GM12878 (cell line): ENCODE measurements at regions of chr7 and their contacts with region 1.

Region 1: GRCh38 chr7:154913638-154914312 is 89.1 kb downstream of the PAXIP1 start:
- DNase-seq: no peak
- ATAC-seq: peak; percentile 100
- H3K4me3 ChIP-seq: no peak overlapping the region
- H3K27ac ChIP-seq: no peak overlapping the region
- H3K4me1 ChIP-seq: no peaks in the 10 kb centered on the region
- H3K27me3 ChIP-seq: no peaks in the 10 kb centered on the region; a peak in 1 of 4 replicates
- CTCF ChIP-seq: peak; percentile 76 to 92 (median 88)
- EP300 ChIP-seq: no peak
- POLR2A ChIP-seq: no peak
- RAD21 ChIP-seq: peak; percentile 84

Region 2: GRCh38 chr7:154867068-154867467 is 46.7 kb before region 1 on chr7:
- CTCF ChIA-PET with region 1: interaction called, 6 read pairs
- POLR2A ChIA-PET with region 1: interaction called, 9 read pairs
- RAD21 ChIA-PET with region 1: interaction called, 4 read pairs
- SMC1A ChIA-PET with region 1: interaction called, 3 read pairs
- in situ Hi-C with region 1: no loop called
- intact Hi-C with region 1: loop called (anchors 5 kb)
- DNase-seq: peak; percentile 59
- ATAC-seq: peak; percentile 80
- H3K4me3 ChIP-seq: no peak overlapping the region
- H3K27ac ChIP-seq: no peak overlapping the region
- H3K4me1 ChIP-seq: peaks cover 8% of the 10 kb centered on the region
- H3K27me3 ChIP-seq: no peaks in the 10 kb centered on the region
- CTCF ChIP-seq: no peak
- EP300 ChIP-seq: peak; percentile 58 to 77; a peak in 2 of 4 replicates
- POLR2A ChIP-seq: no peak
- RAD21 ChIP-seq: no peak

Region 3: GRCh38 chr7:154892462-154892861 is 21.3 kb before region 1 on chr7:
- CTCF ChIA-PET with region 1: interaction called, 10 read pairs
- POLR2A ChIA-PET with region 1: no interaction called
- RAD21 ChIA-PET with region 1: no interaction called
- SMC1A ChIA-PET with region 1: no interaction called
- in situ Hi-C with region 1: no loop called
- intact Hi-C with region 1: no loop called
- DNase-seq: no peak
- ATAC-seq: no peak
- H3K4me3 ChIP-seq: no peak overlapping the region
- H3K27ac ChIP-seq: no peak overlapping the region
- H3K4me1 ChIP-seq: no peaks in the 10 kb centered on the region
- H3K27me3 ChIP-seq: no peaks in the 10 kb centered on the region
- CTCF ChIP-seq: no peak
- EP300 ChIP-seq: no peak
- POLR2A ChIP-seq: no peak
- RAD21 ChIP-seq: no peak

Region 4: DNA sequence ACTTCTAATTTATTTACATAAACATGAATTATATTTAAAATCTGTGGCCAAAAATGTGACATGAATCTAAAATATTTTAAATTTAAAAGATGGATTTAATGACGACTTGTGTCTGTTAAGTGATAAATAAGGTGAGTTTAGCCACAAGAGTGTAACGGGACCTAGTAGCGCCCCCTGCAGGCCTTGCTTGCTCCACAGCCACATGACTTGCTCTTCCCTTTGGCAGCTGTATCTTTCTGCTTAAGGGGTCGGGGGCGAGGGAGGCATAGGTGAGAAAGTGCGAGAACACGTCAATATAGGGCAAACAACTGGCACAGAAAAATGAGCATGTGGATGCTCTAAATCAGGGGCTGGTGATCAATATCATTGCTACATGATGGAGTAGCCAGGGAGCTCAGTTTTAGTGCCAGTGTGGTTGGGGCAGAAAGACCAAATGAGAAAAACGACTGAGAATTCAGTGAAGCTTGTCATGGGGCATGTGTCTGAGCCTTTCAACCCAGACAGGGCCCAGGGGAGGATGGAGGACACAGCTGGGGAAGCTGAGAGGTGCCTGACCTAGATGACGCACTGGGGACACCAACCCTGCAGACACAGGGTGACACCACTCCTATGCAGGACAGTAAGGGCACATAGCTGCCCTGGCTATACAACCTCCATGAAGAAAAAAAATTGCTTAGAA is 39.4 kb after region 1 on chr7:
- CTCF ChIA-PET with region 1: interaction called, 11 read pairs
- POLR2A ChIA-PET with region 1: no interaction called
- RAD21 ChIA-PET with region 1: no interaction called
- SMC1A ChIA-PET with region 1: interaction called, 4 read pairs
- in situ Hi-C with region 1: no loop called
- intact Hi-C with region 1: loop called (anchors 1 kb)
- DNase-seq: no peak
- ATAC-seq: peak; percentile 87
- H3K4me3 ChIP-seq: no peak overlapping the region
- H3K27ac ChIP-seq: no peak overlapping the region
- H3K4me1 ChIP-seq: no peaks in the 10 kb centered on the region
- H3K27me3 ChIP-seq: no peaks in the 10 kb centered on the region
- CTCF ChIP-seq: peak; percentile 54 to 68 (median 63)
- EP300 ChIP-seq: no peak
- POLR2A ChIP-seq: no peak
- RAD21 ChIP-seq: 0 out of 2 replicates have a peak, but pooled peaks have one; percentile 25

Region 5: GRCh38 chr7:155166108-155166507 is 252.3 kb after region 1 on chr7:
- CTCF ChIA-PET with region 1: no interaction called
- POLR2A ChIA-PET with region 1: no interaction called
- RAD21 ChIA-PET with region 1: no interaction called
- SMC1A ChIA-PET with region 1: no interaction called
- in situ Hi-C with region 1: no loop called
- intact Hi-C with region 1: no loop called
- DNase-seq: no peak
- ATAC-seq: no peak
- H3K4me3 ChIP-seq: no peak overlapping the region
- H3K27ac ChIP-seq: no peak overlapping the region
- H3K4me1 ChIP-seq: no peaks in the 10 kb centered on the region
- H3K27me3 ChIP-seq: peaks cover 0 to 2% of the 10 kb centered on the region in 2 experiments; a peak in 1 of 4 replicates
- CTCF ChIP-seq: no peak
- EP300 ChIP-seq: no peak
- POLR2A ChIP-seq: no peak
- RAD21 ChIP-seq: no peak

Region 6: DNA sequence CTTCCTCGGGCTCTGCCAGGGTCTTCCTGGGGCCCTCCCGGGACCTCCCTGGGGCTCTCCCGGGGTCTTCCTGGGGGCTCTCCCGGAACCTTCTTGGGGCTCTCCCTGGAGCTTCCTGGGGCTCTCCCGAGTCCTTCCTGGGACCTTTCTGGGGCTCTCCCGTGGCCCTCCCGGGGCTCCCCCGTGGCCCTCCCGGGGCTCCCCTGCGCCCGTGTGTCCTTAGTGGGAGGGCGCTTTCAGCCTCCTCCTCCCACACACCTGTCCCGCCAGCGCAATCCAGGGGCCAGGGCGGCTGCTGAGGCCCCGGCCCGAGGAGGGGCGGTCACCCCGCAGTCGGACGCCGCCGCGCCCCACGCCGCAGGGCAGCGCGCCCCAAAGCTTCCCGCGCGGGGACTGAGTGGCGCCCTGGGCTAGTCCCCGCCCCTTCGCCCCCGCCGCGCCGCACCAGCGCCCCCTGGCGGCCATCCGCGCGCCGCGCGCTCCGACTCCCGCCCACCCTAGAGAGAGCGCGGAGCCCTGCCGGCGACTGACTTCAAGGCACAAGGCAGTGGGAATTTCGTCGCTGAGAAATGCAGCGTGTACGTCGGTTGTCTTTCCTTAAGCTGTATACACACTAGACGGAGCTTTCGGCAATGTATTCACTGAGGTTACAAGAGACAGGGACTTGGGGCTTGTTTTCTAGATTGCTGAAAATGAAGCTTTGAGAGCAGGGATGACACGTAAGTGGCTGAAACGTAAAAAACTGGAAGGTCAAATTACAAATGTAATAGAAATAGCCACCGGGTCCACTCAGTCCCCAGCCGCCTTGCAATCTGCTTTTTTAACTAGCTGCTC is 431.0 kb after region 1 on chr7:
- CTCF ChIA-PET with region 1: interaction called, 4 read pairs
- POLR2A ChIA-PET with region 1: no interaction called
- RAD21 ChIA-PET with region 1: interaction called, 4 read pairs
- SMC1A ChIA-PET with region 1: interaction called, 4 read pairs
- in situ Hi-C with region 1: no loop called
- intact Hi-C with region 1: loop called (anchors 5 kb)
- DNase-seq: no peak
- ATAC-seq: peak; percentile 98
- H3K4me3 ChIP-seq: peak overlapping the region; percentile 63; the same call in 1 of the 2 replicates
- H3K27ac ChIP-seq: no peak overlapping the region
- H3K4me1 ChIP-seq: peaks cover 5% of the 10 kb centered on the region; the same call in 1 of the 2 replicates
- H3K27me3 ChIP-seq: no peaks in the 10 kb centered on the region
- CTCF ChIP-seq: peak; percentile 71 to 73 (median 72); a peak in 5 of 6 replicates
- EP300 ChIP-seq: no peak
- POLR2A ChIP-seq: peak; percentile 29; the same call in 1 of the 2 replicates
- RAD21 ChIP-seq: peak; percentile 90